AG04450 (cell line): ENCODE measurements at regions of chr11 and their contacts with region 1.

Region 1: GRCh38 chr11:88435189-88435814 is 97.8 kb upstream of the CTSC start:
- DNase-seq: no peak
- H3K4me3 ChIP-seq: no peak overlapping the region
- H3K27ac ChIP-seq: no peak overlapping the region
- H3K27me3 ChIP-seq: no peaks in the 10 kb centered on the region
- CTCF ChIP-seq: no peak

Region 2: GRCh38 chr11:88345408-88345807 is 89.9 kb before region 1 on chr11:
- CTCF ChIA-PET with region 1: no interaction called
- POLR2A ChIA-PET with region 1: interaction called, 15 read pairs
- DNase-seq: no peak
- H3K4me3 ChIP-seq: no peak overlapping the region
- H3K27ac ChIP-seq: no peak overlapping the region
- H3K27me3 ChIP-seq: no peaks in the 10 kb centered on the region
- CTCF ChIP-seq: no peak

Region 3: GRCh38 chr11:88367310-88367709 is 68.0 kb before region 1 on chr11:
- CTCF ChIA-PET with region 1: no interaction called
- POLR2A ChIA-PET with region 1: no interaction called
- DNase-seq: no peak
- H3K4me3 ChIP-seq: no peak overlapping the region
- H3K27ac ChIP-seq: no peak overlapping the region
- H3K27me3 ChIP-seq: no peaks in the 10 kb centered on the region
- CTCF ChIP-seq: no peak